A673 (cell line): ENCODE measurements at regions of chr5 and their contacts with region 1.

Region 1: DNA sequence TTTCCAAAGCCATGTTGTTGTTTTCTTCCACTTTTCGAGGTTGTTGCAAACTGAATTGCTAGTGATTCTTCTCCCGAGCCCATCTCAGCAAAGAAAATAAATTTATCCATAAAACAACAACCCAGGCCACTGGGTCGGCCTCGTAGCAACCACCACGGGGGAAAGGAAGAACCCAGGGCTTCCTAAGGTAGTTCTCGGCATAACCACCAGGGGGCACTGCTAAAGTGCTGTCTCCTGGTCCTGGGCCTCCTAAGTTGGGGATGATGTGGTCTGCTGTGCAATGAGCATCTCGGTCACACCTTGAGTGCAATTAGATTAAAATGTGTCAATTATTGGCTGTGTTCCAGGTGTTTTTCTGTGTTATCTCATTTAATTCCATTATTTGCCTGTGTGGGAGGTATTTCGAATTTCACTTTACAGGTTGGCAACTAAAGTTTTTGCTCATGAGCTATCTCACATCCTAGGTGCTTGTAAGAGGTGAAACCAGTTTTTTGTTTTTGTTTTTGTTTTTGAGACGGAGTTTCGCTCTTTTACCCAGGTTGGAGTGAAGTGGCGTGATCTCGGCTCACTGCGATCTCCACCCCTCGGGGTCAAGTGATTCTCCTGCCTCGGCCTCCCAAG is 102.8 kb upstream of the DAP start:
- DNase-seq: peak; percentile 68
- H3K4me3 ChIP-seq: no peak overlapping the region
- H3K27ac ChIP-seq: no peak overlapping the region
- H3K4me1 ChIP-seq: no peaks in the 10 kb centered on the region
- H3K27me3 ChIP-seq: peaks cover 3% of the 10 kb centered on the region
- CTCF ChIP-seq: peak; percentile 92

Region 2: GRCh38 chr5:10563945-10564837 is 299.7 kb before region 1 on chr5 and contains the start of gene ANKRD33B:
- CTCF ChIA-PET with region 1: no interaction called
- POLR2A ChIA-PET with region 1: no interaction called
- intact Hi-C with region 1: no loop called
- DNase-seq: peak; percentile 77
- H3K4me3 ChIP-seq: peak within 1 kb of the TSS; percentile 74
- H3K27ac ChIP-seq: peak within 1 kb of the TSS; percentile 16
- H3K4me1 ChIP-seq: peaks cover 14% of the 10 kb centered on the region
- H3K27me3 ChIP-seq: peaks cover 28% of the 10 kb centered on the region
- CTCF ChIP-seq: no peak
- total RNA-seq, gene ANKRD33B: 0.75 and 1.1 TPM in 2 replicates

Region 3: DNA sequence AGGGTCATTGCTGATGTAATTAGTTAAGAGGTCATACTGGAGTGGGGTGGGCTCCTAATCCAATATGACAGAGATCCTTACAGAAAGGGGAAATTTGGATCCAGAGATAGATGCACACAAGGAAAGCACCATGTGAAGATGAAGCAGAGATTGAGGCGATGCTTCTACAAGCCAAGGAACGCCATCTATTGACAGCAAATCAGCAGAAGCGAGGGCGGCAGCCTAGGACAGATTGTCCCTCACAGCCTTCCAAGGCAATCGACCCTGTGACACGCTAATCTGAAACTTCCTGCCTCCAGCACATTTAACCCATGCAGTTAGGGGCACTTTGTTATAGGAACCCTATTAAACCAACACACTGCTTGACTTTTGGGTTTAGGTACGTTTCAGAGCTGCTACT is 182.3 kb after region 1 on chr5:
- CTCF ChIA-PET with region 1: no interaction called
- POLR2A ChIA-PET with region 1: no interaction called
- intact Hi-C with region 1: loop called (anchors 5 kb)
- DNase-seq: peak; percentile 8
- H3K4me3 ChIP-seq: no peak overlapping the region
- H3K27ac ChIP-seq: no peak overlapping the region
- H3K4me1 ChIP-seq: no peaks in the 10 kb centered on the region
- H3K27me3 ChIP-seq: no peaks in the 10 kb centered on the region
- CTCF ChIP-seq: no peak; the same call in 1 of the 2 replicates